ENCODE measurements at regions of chr6 and their contacts with region 1.

Region 1: DNA sequence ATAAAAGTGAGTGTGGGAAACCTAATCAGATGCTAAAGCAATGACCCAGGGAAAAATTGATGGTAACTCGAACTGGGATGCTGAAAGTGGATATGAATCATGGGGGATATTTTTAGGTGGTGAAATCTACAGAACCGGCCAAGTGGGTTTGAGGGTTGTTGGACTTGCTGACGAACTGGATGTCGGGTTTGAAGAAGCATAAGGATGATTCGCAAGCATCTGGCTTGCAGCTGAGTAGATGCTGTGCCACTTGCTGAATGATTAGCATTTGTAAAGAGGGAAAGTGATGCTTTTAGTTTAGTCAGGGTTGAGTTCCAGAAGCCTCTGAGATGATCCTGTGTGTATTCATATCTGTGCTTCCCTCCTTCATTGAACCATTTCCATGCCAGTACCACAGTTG is 54.9 kb downstream of the UBR2 start:
- DNase-seq: peak; percentile 49 to 59
- ATAC-seq: peak; percentile 93 to 98
- H3K4me3 ChIP-seq: no peak overlapping the region
- H3K27ac ChIP-seq: peak overlapping the region; percentile 74 to 79 (median 78)
- H3K4me1 ChIP-seq: peaks cover 4 to 10% of the 10 kb centered on the region in 2 donors
- H3K27me3 ChIP-seq: no peaks in the 10 kb centered on the region
- CTCF ChIP-seq: no peak
- POLR2A ChIP-seq: no peak

Region 2: DNA sequence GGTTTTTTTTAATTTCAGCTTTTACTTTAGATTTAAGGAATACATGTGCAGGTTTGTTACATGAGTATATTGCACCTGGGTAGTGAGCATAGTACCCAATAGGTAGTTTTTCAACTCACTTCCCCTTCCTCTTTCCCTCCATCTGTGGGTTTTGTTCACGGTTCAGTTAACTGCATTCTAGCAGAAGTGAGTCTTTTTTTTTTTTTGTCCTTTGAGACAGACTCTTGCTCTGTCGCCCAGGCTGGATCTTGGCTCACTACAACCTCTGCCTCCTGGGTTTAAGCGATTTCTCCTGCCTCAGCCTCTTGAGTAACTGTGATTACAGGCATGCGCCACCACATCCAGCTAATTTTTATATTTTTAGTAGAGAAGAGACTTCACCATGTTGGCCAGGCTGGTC is 46.2 kb before region 1 on chr6:
- in situ Hi-C with region 1: no loop called
- intact Hi-C with region 1: loop called (anchors 5 kb)
- DNase-seq: no peak
- ATAC-seq: no peak
- H3K4me3 ChIP-seq: no peak overlapping the region
- H3K27ac ChIP-seq: peak overlapping the region in 2 of 4 donors; percentile 50 to 52
- H3K4me1 ChIP-seq: peaks cover 62 to 67% of the 10 kb centered on the region in 2 donors
- H3K27me3 ChIP-seq: no peaks in the 10 kb centered on the region
- CTCF ChIP-seq: no peak
- POLR2A ChIP-seq: no peak

Region 3: DNA sequence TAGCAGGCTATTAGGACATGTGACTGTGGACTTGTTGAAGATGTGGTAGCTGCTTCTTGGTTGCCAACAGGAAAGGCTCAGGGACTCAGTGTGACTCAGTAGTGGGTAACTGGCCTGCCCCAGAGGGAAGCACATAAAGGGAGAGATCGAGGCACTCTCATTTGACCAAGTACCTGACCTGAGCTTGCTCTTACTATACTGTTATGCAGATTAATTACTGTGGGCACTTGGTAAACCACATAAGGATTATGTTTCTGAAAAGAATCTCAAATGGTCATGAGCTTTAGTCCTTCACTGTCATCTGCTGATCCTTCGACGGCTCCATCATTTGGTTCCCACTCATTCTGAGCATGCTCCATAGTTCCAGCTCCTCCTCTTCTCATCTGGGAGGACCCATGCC is 212.6 kb after region 1 on chr6:
- in situ Hi-C with region 1: no loop called
- intact Hi-C with region 1: no loop called
- DNase-seq: no peak
- ATAC-seq: peak; percentile 23 to 30
- H3K4me3 ChIP-seq: no peak overlapping the region
- H3K27ac ChIP-seq: no peak overlapping the region
- H3K4me1 ChIP-seq: no peaks in the 10 kb centered on the region
- H3K27me3 ChIP-seq: no peaks in the 10 kb centered on the region
- CTCF ChIP-seq: no peak
- POLR2A ChIP-seq: no peak

Measured in gastrocnemius medialis (tissue), 4 donors.